HEK293 (cell line): ENCODE measurements at regions of chr21 and their contacts with region 1.

Region 1: DNA sequence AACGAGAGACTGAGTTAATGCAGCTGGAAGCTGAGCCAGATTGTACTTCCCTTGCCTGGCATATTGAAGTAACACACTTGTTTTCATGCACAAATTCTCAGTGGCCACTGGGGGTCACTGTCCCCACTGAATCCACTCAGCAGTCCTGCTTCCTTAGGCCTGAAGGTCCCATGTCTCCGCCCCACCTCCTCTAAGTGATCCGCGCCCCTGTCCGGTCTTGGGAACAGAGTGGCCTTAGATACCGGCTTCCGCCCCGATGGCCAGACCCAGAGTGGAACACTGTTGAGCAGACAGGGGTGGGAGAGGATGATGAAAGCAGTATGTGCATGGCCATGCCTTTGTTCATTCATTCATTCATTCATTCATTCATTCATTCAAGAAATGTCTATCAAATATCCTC is 34.8 kb downstream of the CHAF1B start:
- H3K4me3 ChIP-seq: no peak overlapping the region
- H3K27ac ChIP-seq: no peak overlapping the region
- H3K4me1 ChIP-seq: no peaks in the 10 kb centered on the region
- CTCF ChIP-seq: peak; percentile 91

Region 2: DNA sequence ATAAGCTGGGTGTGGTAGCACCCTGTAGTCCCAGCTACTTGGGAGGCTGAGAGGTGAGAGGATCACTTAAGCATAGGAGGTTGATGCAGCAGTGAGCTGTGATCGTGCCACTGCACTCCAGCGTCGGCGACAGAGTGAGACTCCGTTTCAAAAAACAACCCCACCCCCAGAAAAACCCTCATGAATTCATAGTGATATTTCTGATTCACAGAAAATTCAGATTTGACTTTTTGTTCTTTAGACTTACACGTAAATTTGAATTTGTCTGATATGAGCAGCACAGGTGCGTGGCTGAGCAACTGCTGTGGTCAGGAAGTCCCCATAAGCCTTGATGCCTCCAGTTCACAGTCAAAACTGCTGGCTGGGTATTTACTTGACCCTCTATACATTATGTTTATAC is 110.0 kb before region 1 on chr21:
- CTCF ChIA-PET with region 1: no interaction called
- POLR2A ChIA-PET with region 1: no interaction called
- H3K4me3 ChIP-seq: no peak overlapping the region
- H3K27ac ChIP-seq: no peak overlapping the region
- H3K4me1 ChIP-seq: no peaks in the 10 kb centered on the region
- CTCF ChIP-seq: no peak

Region 3: DNA sequence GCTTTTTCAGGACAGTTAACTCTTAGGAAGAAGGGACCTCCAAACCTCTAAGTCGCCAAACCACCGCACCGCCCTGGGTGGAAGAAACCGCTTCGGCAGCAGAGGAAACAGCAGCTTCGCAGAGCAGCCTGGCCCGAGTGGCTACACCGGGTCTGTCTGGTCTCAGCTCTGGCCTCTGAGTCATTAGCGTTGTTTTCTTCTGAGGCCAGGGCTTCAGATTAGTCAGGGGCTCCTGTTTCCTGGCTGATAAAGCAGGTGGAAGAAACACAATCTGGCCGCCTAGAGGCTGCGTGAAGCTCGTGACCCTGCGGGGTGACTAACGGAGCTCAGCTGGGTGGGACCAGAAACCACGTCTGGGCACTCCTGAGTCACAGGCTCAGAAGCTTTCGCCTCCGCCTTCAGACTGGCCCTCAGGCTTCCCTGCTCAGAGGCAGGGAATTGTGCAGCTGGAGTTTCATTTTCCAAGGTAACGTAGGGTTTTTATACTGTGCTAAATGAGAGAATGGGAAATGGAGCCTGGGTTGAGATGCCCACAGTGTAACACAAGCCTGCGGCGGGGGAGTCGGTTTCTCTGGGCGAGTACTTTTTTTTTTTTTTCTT is 10.1 kb after region 1 on chr21:
- CTCF ChIA-PET with region 1: interaction called, 11 read pairs
- POLR2A ChIA-PET with region 1: interaction called, 6 read pairs
- H3K4me3 ChIP-seq: no peak overlapping the region; the same call in 1 of the 2 replicates
- H3K27ac ChIP-seq: peak overlapping the region; percentile 54
- H3K4me1 ChIP-seq: peaks cover 8% of the 10 kb centered on the region; the same call in 1 of the 2 replicates
- CTCF ChIP-seq: peak; percentile 16; the same call in 1 of the 2 replicates

Region 4: DNA sequence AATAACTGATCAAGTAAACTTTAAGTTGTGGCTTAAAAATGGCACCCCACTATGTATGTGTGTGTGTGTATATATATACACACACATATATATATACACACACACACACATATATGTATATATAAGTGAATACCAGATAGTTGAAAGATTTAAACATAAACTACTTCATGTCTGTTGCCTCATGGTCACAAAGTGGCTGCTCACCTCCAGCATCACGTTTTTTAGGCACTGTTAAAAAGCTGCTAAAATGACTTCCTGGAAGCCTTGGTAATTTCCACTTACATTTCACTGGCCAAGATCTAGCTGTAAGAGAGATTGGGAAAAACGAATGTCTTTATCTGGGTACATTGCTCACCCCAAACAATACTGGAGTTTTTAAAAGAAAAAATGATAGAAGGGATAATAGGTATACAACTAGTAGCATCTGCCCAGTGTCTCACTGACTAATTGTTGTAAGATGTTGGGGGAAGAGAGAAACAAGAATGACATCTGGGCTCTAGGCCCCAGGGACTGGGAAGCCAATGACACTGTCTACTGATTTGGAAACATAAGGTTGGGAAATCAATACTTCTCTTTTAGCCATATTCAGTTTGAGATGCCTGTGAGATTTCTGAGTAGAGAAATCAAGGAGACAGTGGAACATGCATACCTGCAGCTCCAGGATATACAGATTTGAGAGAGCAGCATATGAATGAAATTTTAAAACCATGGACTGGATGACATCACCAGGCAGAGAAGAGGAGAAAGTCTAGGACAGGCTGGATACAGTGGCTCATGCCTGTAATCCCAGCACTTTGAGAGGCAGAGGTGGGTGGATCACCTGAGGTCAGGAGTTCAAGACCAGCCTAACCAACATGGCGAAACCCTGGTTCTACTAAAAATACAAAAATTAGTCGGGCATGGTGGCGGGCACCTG is 17.1 kb after region 1 on chr21:
- CTCF ChIA-PET with region 1: interaction called, 11 read pairs
- POLR2A ChIA-PET with region 1: no interaction called
- H3K4me3 ChIP-seq: no peak overlapping the region
- H3K27ac ChIP-seq: no peak overlapping the region
- H3K4me1 ChIP-seq: no peaks in the 10 kb centered on the region
- CTCF ChIP-seq: no peak